ENCODE measurements at regions of chr6 and their contacts with region 1.

Region 1: DNA sequence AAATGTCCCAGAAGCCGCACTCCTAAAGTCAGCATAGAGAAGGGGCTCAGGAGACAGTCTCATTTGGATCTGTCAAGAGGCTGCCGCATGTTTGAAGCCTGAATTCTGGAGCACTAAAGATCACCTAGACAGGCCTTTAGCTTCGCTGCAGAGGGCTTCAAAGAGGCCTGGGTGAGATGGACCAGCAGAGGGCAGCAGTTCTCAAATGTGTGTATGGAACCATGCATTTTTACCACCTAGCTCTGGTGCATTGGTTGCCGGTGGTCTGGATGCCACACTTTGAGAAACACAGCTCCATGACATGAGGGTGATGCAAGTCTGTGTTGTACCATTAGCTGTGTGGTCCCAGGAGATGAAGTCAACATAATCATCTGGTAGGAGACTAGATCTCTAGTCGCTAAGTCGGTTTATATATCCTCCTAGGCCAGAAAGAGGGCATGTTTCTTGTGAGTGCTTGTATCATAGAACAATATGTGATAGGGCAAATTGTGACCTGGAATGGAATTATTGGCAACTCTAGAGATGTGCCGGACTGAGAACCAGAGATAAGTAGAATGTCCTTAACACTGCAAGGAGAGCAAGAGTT is 64.8 kb downstream of the KIAA0319 start:
- DNase-seq: peak; percentile 91
- ATAC-seq: peak; percentile 92
- H3K4me3 Mint-ChIP-seq: no peak overlapping the region
- H3K27ac Mint-ChIP-seq: no peak overlapping the region
- H3K4me1 Mint-ChIP-seq: peaks cover 3% of the 10 kb centered on the region
- H3K27me3 Mint-ChIP-seq: peaks cover 2% of the 10 kb centered on the region
- CTCF ChIP-seq: peak; percentile 76

Region 2: DNA sequence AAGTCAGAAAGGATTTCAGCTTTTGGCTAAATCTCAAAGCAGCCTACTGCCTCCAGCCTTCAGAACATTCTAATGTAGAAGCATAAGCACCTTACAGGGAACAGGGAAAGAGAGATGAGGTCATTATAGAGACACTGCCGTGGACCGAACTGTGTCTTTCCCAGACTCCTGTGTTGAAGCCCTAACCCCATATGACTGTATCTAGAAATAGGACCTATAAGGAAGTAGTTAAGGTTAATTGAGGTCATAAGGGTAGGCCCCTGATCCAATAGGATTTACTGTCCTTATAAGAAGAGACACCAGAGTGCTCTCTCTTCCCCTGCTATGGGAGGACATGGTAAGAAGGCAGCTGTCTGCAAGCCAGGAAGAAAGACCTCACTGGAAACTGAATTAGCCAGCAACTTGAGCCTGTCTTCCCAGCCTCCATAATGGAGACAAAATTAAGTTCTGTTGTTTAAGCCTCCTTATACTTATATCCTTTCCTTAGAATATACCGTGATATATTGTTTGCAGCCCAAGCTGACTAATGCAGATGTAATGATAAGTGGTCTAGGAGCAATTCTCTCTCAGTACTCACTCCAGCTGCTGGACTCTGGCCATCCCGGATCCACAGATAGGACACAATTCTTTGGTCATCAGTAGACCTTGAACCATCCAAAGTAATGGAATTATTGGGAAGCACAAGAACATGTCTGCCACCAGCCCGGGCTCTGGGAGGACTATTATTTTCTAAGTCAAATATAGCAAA is 15.0 kb before region 1 on chr6:
- CTCF ChIA-PET with region 1: interaction called, 13 read pairs
- POLR2A ChIA-PET with region 1: interaction called, 5 read pairs
- intact Hi-C with region 1: no loop called
- DNase-seq: no peak
- ATAC-seq: no peak
- H3K4me3 Mint-ChIP-seq: no peak overlapping the region
- H3K27ac Mint-ChIP-seq: no peak overlapping the region
- H3K4me1 Mint-ChIP-seq: no peaks in the 10 kb centered on the region
- H3K27me3 Mint-ChIP-seq: no peaks in the 10 kb centered on the region
- CTCF ChIP-seq: no peak

Region 3: GRCh38 chr6:24643925-24644324 is 62.7 kb after region 1 on chr6:
- CTCF ChIA-PET with region 1: interaction called, 10 read pairs
- POLR2A ChIA-PET with region 1: no interaction called
- intact Hi-C with region 1: no loop called
- DNase-seq: no peak
- ATAC-seq: no peak
- H3K4me3 Mint-ChIP-seq: no peak overlapping the region
- H3K27ac Mint-ChIP-seq: no peak overlapping the region
- H3K4me1 Mint-ChIP-seq: peaks cover 9% of the 10 kb centered on the region
- H3K27me3 Mint-ChIP-seq: peaks cover 27% of the 10 kb centered on the region
- CTCF ChIP-seq: no peak

Region 4: DNA sequence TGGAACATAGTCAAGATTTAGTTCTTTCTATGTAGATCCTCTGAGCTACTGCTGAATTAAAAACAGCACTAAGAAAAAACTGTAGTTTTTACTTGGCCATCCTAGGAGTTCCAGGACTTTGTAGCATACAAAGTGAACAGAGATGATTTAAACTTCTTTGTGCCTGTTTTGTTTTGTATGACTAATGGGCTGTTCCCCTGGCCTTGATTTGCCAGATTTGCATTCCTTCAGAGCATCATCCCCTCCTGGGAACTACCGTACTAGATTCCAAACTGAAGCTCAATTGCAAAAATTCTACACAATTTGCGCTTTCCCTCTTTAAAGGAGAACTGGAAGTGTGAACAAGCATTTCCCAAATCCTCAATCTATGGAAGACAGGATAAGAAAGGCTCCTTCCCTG is 108.8 kb after region 1 on chr6:
- CTCF ChIA-PET with region 1: interaction called, 141 read pairs
- POLR2A ChIA-PET with region 1: no interaction called
- intact Hi-C with region 1: loop called (anchors 1 kb)
- DNase-seq: no peak
- ATAC-seq: no peak
- H3K4me3 Mint-ChIP-seq: no peak overlapping the region
- H3K27ac Mint-ChIP-seq: no peak overlapping the region
- H3K4me1 Mint-ChIP-seq: peaks cover 19% of the 10 kb centered on the region
- H3K27me3 Mint-ChIP-seq: no peaks in the 10 kb centered on the region
- CTCF ChIP-seq: no peak

Region 5: GRCh38 chr6:24761193-24761835 is 180.1 kb after region 1 on chr6:
- CTCF ChIA-PET with region 1: interaction called, 72 read pairs
- POLR2A ChIA-PET with region 1: no interaction called
- intact Hi-C with region 1: loop called (anchors 1 kb)
- DNase-seq: peak; percentile 17
- ATAC-seq: peak; percentile 56
- H3K4me3 Mint-ChIP-seq: no peak overlapping the region
- H3K27ac Mint-ChIP-seq: no peak overlapping the region
- H3K4me1 Mint-ChIP-seq: peaks cover 7% of the 10 kb centered on the region
- H3K27me3 Mint-ChIP-seq: no peaks in the 10 kb centered on the region
- CTCF ChIP-seq: no peak

Region 6: DNA sequence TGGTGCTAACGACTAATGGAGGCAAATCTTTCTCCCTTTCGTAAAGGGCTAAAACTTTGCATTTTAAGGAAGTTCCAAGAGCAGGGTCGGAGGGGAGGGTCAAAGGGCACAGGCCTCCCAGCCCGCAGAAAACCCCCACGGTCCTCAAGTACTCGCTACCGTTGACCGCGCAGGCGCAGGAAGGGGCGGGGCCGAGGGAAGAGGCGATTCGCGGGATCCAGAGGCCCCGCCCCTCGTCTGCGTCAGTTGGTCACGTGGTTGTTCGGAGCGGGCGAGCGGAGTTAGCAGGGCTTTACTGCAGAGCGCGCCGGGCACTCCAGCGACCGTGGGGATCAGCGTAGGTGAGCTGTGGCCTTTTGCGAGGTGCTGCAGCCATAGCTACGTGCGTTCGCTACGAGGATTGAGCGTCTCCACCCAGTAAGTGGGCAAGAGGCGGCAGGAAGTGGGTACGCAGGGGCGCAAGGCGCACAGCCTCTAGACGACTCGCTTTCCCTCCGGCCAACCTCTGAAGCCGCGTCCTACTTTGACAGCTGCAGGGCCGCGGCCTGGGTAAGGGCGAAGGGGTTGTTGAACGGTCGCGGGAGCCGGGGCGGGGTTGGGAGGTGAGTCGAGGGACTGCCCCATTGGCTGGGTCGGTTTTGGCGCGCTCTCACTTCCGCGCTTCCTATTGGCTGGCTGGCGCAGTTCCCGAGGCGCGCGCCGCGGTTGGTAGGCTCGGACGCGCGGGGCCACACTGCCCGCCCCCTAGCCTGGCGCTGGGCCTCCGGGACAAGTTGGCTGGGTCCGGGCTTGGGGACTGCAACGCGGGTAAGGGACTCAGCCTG is 193.7 kb after region 1 on chr6 and contains the start of gene GMNN:
- CTCF ChIA-PET with region 1: interaction called, 17 read pairs
- POLR2A ChIA-PET with region 1: no interaction called
- intact Hi-C with region 1: no loop called
- DNase-seq: peak; percentile 99
- ATAC-seq: peak; percentile 93
- H3K4me3 Mint-ChIP-seq: peak within 1 kb of the TSS; percentile 98
- H3K27ac Mint-ChIP-seq: peak within 1 kb of the TSS; percentile 100
- H3K4me1 Mint-ChIP-seq: peaks cover 23% of the 10 kb centered on the region
- H3K27me3 Mint-ChIP-seq: no peaks in the 10 kb centered on the region
- CTCF ChIP-seq: no peak
- total RNA-seq, gene GMNN: 69.2 to 72.6 TPM

Region 7: GRCh38 chr6:25103603-25104002 is 522.4 kb after region 1 on chr6:
- CTCF ChIA-PET with region 1: no interaction called
- POLR2A ChIA-PET with region 1: no interaction called
- intact Hi-C with region 1: no loop called
- DNase-seq: no peak
- ATAC-seq: no peak
- H3K4me3 Mint-ChIP-seq: no peak overlapping the region
- H3K27ac Mint-ChIP-seq: no peak overlapping the region
- H3K4me1 Mint-ChIP-seq: peaks cover 7% of the 10 kb centered on the region
- H3K27me3 Mint-ChIP-seq: no peaks in the 10 kb centered on the region
- CTCF ChIP-seq: no peak